ENCODE measurements at regions of chr22 and their contacts with region 1.

Region 1: DNA sequence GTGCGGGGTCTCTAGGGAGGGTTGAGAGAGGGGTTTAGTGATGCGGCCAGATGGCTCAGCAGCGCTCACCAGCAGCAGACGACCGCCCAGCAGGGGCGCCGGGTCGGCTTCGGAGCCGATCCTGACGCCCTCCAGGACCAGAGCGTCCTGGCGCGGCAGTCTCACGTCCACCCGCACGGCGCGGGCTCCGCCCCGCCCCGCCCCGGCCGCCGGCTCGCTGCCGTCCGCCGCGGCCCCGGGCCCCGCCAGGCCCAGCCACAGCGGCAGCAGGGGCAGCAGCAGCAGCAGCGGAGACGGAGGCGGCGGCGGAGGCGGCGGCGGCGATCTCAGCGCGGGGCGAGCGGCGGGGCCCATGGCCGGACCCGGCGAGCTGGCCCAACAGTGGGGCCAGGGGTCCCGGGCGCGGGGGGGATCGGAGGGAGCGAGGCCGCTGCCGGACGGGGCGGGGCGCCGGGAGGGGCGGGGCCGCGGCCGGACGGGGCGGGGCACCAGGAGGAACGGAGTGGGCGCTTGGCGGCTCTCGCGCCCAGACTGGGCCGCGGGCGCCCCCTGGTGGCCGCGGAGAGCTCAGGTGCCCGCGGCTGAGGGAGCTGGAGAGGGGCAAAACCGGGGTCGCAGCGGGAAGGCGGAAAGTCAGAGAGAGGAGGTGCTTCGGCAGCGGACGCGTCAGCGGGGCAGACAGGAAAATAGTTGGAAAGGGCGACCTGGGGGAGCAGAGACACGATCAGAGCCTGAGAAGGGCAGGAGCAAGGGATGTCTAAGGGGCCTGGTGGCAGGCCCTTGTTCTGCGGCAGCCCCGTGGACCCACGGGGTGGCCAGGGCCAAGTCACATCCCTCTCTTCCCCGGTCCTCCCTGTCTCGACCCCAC is at the start of gene RNF215:
- DNase-seq: peak; percentile 42 to 96
- H3K4me3 ChIP-seq: peak within 1 kb of the TSS; percentile 31
- CTCF ChIP-seq: peak in 1 of 3 donors; percentile 87
- POLR2A ChIP-seq: no peak
- total RNA-seq, gene RNF215: 6.9 to 7.8 (median 7.3) TPM

Region 2: GRCh38 chr22:30116362-30117117 is 270.7 kb before region 1 on chr22:
- intact Hi-C with region 1: loop called (anchors 10 kb)
- DNase-seq: no peak
- H3K4me3 ChIP-seq: no peak overlapping the region
- CTCF ChIP-seq: no peak
- POLR2A ChIP-seq: no peak

Region 3: GRCh38 chr22:30289134-30289979 is 97.8 kb before region 1 on chr22 and contains the start of gene CASTOR1:
- intact Hi-C with region 1: loop called (anchors 2 kb)
- DNase-seq: peak; percentile 99 to 100
- H3K4me3 ChIP-seq: peak within 1 kb of the TSS; percentile 64
- CTCF ChIP-seq: no peak
- POLR2A ChIP-seq: no peak
- total RNA-seq, gene CASTOR1: 16.3 to 38.1 (median 22.6) TPM

Region 4: GRCh38 chr22:30485362-30485988 is 98.3 kb after region 1 on chr22:
- intact Hi-C with region 1: loop called (anchors 5 kb)
- DNase-seq: peak; percentile 33 to 91
- H3K4me3 ChIP-seq: no peak overlapping the region
- CTCF ChIP-seq: peak in 1 of 3 donors; percentile 70
- POLR2A ChIP-seq: no peak